Heart left ventricle (tissue), 16 donors: ENCODE measurements at regions of chr7 and their contacts with region 1.

Region 1: DNA sequence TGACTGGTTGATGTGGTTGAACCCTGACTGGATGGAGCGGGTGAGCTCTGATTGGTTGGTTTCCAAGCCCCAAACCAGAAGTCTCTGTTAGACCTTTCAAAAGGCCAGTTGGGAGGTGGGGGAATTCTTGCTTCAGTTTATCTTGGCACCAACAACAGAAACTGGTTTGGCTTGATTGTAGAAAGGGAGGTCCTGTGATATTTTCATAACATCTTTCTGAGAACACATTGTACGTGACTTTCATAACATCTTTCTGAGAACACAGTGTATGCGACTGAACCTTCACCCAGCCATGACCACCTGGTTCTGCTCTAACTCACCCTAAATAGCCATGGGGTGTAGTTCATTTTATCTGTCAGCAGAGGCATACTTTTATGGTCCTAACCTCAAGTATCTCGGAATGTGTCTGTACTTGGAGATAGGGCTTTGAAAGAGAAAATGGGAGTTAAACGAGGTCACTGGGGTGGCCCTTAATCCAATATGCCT is 88.3 kb downstream of the GALNT17 start:
- DNase-seq: peak in 2 of 5 donors; percentile 34 to 54
- ATAC-seq: peak; percentile 93 to 97 (median 96)
- H3K4me3 ChIP-seq: no peak overlapping the region
- H3K27ac ChIP-seq: peak overlapping the region in 11 of 12 donors; percentile 44 to 88 (median 78)
- H3K4me1 ChIP-seq: peaks cover 0 to 5% (median 0%) of the 10 kb centered on the region in 12 donors
- H3K27me3 ChIP-seq: no peaks in the 10 kb centered on the region
- CTCF ChIP-seq: peak in 4 of 12 donors; percentile 10 to 26 (median 20)
- POLR2A ChIP-seq: no peak

Region 2: GRCh38 chr7:71019706-71020105 is 200.5 kb before region 1 on chr7:
- intact Hi-C with region 1: no loop called
- DNase-seq: peak in 3 of 5 donors; percentile 31 to 68 (median 31)
- ATAC-seq: peak in 1 of 4 donors; percentile 31
- H3K4me3 ChIP-seq: no peak overlapping the region
- H3K27ac ChIP-seq: no peak overlapping the region
- H3K4me1 ChIP-seq: no peaks in the 10 kb centered on the region
- H3K27me3 ChIP-seq: no peaks in the 10 kb centered on the region
- CTCF ChIP-seq: no peak
- POLR2A ChIP-seq: no peak

Region 3: DNA sequence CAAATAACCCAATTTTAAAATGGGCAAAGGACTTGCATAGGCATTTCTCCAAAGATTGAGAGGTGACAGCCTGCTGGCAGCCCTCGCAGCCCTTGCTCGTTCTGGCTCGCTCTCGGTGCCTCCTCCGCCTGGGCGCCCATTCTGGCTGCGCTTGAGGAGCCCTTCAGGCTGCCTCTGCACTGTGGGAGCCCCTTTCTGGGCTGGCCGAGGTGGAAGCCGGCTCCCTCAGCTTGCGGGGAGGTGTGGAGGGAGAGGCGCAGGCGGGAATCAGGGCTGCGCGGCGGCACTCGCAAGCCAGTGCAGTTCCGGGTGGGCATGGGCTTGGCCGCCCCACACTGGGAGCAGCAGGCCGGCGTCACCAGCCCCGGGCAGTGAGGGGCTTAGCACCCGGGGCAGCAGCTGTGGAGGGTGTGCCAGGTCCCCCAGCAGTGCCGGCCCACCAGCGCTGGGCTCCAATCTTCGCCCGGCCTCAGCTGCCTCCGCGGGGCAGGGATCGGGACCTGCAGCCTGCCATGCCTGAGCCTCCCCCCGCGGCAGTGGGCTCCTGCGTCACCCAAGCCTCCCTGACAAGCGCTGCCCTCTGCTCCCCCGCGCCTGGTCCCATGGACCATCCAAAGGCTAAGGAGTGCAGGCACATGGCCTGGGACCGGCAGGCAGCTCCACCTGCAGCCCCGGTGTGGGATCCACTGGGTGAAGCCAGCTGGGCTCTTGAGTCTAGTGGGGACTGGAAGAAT is 142.3 kb before region 1 on chr7:
- intact Hi-C with region 1: no loop called
- DNase-seq: peak in 1 of 5 donors; percentile 55
- ATAC-seq: no peak
- H3K4me3 ChIP-seq: no peak overlapping the region
- H3K27ac ChIP-seq: no peak overlapping the region
- H3K4me1 ChIP-seq: no peaks in the 10 kb centered on the region
- H3K27me3 ChIP-seq: no peaks in the 10 kb centered on the region
- CTCF ChIP-seq: no peak
- POLR2A ChIP-seq: no peak

Region 4: DNA sequence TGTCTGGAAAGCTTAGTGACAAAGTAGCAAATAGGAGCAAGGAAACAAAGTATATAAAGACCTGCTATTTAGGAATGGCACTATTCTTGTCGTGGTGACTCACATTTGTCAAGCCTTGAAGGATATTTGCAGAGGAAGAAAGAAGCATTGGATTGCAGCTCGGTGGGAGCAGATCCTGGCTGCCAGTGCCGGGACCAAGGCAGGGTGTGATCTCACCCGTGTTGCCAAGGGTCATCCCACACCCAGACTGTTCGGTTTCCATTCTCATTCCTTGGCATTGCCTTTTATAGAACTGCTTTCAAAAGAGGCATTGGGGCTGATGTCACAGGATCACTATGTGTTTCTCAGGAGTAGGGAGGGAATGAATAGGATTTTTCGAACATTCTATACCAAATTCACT is 87.8 kb after region 1 on chr7:
- intact Hi-C with region 1: loop called in 1 of 10 experiments (anchors 5 kb)
- DNase-seq: peak in 4 of 5 donors; percentile 43 to 64 (median 58)
- ATAC-seq: peak; percentile 82 to 91 (median 89)
- H3K4me3 ChIP-seq: no peak overlapping the region
- H3K27ac ChIP-seq: peak overlapping the region; percentile 22 to 95 (median 68)
- H3K4me1 ChIP-seq: peaks cover 0 to 28% (median 2%) of the 10 kb centered on the region in 12 donors
- H3K27me3 ChIP-seq: no peaks in the 10 kb centered on the region
- CTCF ChIP-seq: no peak
- POLR2A ChIP-seq: no peak

Region 5: GRCh38 chr7:71348821-71349681 is 128.8 kb after region 1 on chr7:
- intact Hi-C with region 1: no loop called
- DNase-seq: no peak
- ATAC-seq: peak in 1 of 4 donors; percentile 32
- H3K4me3 ChIP-seq: no peak overlapping the region
- H3K27ac ChIP-seq: peak overlapping the region in 1 of 12 donors; percentile 45
- H3K4me1 ChIP-seq: peaks cover 0 to 6% (median 0%) of the 10 kb centered on the region in 12 donors
- H3K27me3 ChIP-seq: no peaks in the 10 kb centered on the region
- CTCF ChIP-seq: no peak
- POLR2A ChIP-seq: no peak